SK-N-SH (cell line): ENCODE measurements at regions of chrX and their contacts with region 1.

Region 1: GRCh38 chrX:136028251-136028984 is 43.2 kb downstream of the SLC9A6 start:
- DNase-seq: peak; percentile 47
- H3K4me3 ChIP-seq: no peak overlapping the region
- H3K27ac ChIP-seq: no peak overlapping the region
- H3K4me1 ChIP-seq: no peaks in the 10 kb centered on the region
- H3K27me3 ChIP-seq: no peaks in the 10 kb centered on the region
- CTCF ChIP-seq: peak; percentile 84
- EP300 ChIP-seq: no peak
- RAD21 ChIP-seq: peak; percentile 88

Region 2: DNA sequence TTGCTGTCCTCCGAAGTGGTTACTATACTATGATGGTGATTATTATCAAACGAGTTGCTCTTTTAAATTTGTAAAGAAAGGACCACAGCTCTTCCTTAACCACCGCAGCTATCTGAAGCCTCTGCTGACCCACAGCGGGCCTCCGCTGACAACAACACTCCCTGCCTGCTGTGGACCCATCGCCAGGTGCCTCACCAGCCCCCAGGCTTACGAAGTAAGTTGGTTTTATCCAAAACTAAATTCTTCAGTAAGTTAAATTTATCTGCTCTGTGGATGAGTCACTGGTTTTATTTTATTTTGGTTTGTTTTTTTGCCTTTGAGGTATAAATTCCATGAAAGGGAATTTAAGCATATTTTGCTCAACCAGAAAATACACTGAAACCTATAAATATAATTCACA is 11.6 kb after region 1 on chrX:
- CTCF ChIA-PET with region 1: interaction called, 30 read pairs
- POLR2A ChIA-PET with region 1: no interaction called
- DNase-seq: no peak
- H3K4me3 ChIP-seq: no peak overlapping the region
- H3K27ac ChIP-seq: peak overlapping the region in 1 of 2 experiments; percentile 19; a peak in 2 of 4 replicates
- H3K4me1 ChIP-seq: no peaks in the 10 kb centered on the region
- H3K27me3 ChIP-seq: no peaks in the 10 kb centered on the region; the same call in none of the 2 replicates
- CTCF ChIP-seq: no peak
- EP300 ChIP-seq: no peak
- RAD21 ChIP-seq: no peak

Region 3: DNA sequence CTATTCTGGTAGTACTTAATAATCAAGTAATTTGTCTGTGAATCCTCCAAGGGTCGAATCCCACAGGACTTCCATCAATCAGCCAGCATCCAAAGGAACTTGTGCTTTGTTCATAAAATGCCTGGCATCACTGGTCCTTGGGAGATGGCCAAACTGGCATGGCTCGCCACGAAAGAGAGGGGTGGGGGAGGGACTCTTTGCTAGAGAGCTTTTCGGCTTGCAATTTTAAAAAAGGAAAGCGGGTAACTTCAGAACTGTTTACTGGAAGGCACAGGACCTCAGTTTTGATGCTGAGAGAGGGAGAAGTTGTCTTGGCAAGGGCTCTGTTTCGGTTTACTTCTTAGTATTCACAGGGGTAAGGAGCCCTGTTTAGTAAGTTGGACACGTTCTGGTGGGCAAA is 39.5 kb after region 1 on chrX:
- CTCF ChIA-PET with region 1: no interaction called
- POLR2A ChIA-PET with region 1: no interaction called
- DNase-seq: no peak
- H3K4me3 ChIP-seq: no peak overlapping the region
- H3K27ac ChIP-seq: no peak overlapping the region
- H3K4me1 ChIP-seq: no peaks in the 10 kb centered on the region
- H3K27me3 ChIP-seq: peaks cover 5% of the 10 kb centered on the region; the same call in 1 of the 2 replicates
- CTCF ChIP-seq: no peak
- EP300 ChIP-seq: no peak
- RAD21 ChIP-seq: no peak

Region 4: GRCh38 chrX:136162831-136163570 is 134.6 kb after region 1 on chrX:
- CTCF ChIA-PET with region 1: interaction called, 14 read pairs
- POLR2A ChIA-PET with region 1: no interaction called
- DNase-seq: peak; percentile 43
- H3K4me3 ChIP-seq: no peak overlapping the region; a peak in 1 of 4 replicates
- H3K27ac ChIP-seq: peak overlapping the region in 1 of 2 experiments; percentile 60; a peak in 2 of 4 replicates
- H3K4me1 ChIP-seq: no peaks in the 10 kb centered on the region
- H3K27me3 ChIP-seq: peaks cover 6% of the 10 kb centered on the region; the same call in 1 of the 2 replicates
- CTCF ChIP-seq: peak; percentile 69
- EP300 ChIP-seq: no peak
- RAD21 ChIP-seq: peak; percentile 66

Region 5: GRCh38 chrX:136268051-136269048 is 239.9 kb after region 1 on chrX:
- CTCF ChIA-PET with region 1: interaction called, 37 read pairs
- POLR2A ChIA-PET with region 1: no interaction called
- DNase-seq: peak; percentile 48
- H3K4me3 ChIP-seq: no peak overlapping the region
- H3K27ac ChIP-seq: no peak overlapping the region
- H3K4me1 ChIP-seq: no peaks in the 10 kb centered on the region
- H3K27me3 ChIP-seq: peaks cover 5% of the 10 kb centered on the region; the same call in 1 of the 2 replicates
- CTCF ChIP-seq: peak; percentile 90
- EP300 ChIP-seq: no peak
- RAD21 ChIP-seq: peak; percentile 80

Region 6: GRCh38 chrX:136694431-136695087 is 666.1 kb after region 1 on chrX:
- CTCF ChIA-PET with region 1: interaction called, 16 read pairs
- POLR2A ChIA-PET with region 1: no interaction called
- DNase-seq: peak; percentile 62
- H3K4me3 ChIP-seq: no peak overlapping the region
- H3K27ac ChIP-seq: peak overlapping the region in 1 of 2 experiments; percentile 4; a peak in 1 of 4 replicates
- H3K4me1 ChIP-seq: no peaks in the 10 kb centered on the region; a peak in 1 of 4 replicates
- H3K27me3 ChIP-seq: no peaks in the 10 kb centered on the region; the same call in 1 of the 2 replicates
- CTCF ChIP-seq: peak; percentile 78
- EP300 ChIP-seq: no peak
- RAD21 ChIP-seq: peak; percentile 91